ENCODE measurements at regions of chr4 and their contacts with region 1.

Region 1: GRCh38 chr4:175536852-175537453 is 275.1 kb downstream of the GPM6A start:
- DNase-seq: no peak
- H3K4me3 ChIP-seq: no peak overlapping the region
- H3K27ac ChIP-seq: no peak overlapping the region
- H3K4me1 ChIP-seq: no peaks in the 10 kb centered on the region
- H3K27me3 ChIP-seq: no peaks in the 10 kb centered on the region
- CTCF ChIP-seq: peak; percentile 15 to 57 (median 41)

Region 2: DNA sequence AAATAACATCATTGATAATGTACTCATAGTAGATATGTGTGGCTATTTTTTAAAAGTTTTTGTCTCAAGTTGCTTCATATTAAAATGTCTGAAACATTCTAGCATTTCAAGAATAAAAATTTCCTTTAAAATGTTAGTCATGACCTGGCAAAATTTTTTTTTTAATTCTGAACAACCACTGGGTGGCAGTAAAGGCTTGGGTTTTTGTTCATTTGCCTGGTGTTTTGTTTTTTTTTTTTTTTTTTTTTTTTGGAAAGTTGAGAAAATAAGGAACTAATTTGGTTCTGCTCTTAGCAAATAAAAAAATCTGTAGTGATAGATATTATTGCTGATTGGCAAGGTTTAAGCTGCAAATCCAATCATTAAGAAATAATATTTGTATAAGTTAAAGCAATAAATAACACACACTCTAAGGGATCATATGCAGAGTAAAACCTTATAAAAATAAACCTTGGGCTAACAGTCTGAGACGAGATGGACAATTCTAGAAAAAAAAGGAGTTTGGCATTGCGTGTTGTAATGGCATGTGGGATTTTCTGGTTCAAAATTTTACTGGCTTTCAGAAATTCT is 1171.8 kb before region 1 on chr4:
- intact Hi-C with region 1: loop called (anchors 5 kb)
- DNase-seq: no peak
- H3K4me3 ChIP-seq: no peak overlapping the region
- H3K27ac ChIP-seq: no peak overlapping the region
- H3K4me1 ChIP-seq: no peaks in the 10 kb centered on the region
- H3K27me3 ChIP-seq: no peaks in the 10 kb centered on the region
- CTCF ChIP-seq: peak in 2 of 3 experiments; percentile 32 to 52

Region 3: DNA sequence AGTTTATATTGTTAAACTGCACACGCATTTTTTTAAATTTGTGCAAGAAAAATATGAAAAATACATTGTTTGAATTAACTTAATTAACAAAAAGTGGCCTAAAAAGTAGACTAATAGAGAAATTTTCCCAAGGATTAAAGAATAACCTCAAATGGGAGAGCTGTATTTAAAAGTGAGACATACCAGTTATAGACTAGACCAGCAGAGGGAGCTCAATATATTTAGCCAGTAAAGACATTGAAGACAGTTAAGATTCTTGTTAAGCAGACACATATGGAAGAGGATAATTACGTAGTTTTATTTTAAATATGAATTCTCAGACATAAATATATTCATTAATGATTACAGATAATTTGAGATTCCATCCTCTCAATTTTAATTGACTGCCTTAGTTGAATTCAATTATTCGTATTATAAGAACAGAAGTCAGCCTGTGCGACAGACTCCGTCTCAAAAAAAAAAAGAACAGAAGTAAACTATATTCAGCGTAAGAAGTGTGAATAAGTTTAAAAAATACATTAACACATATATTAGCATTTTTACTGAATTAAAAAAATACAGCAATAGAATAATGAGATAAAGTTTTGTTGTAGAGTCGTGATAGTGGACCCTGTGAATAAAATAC is 772.7 kb before region 1 on chr4:
- intact Hi-C with region 1: loop called (anchors 2 kb)
- DNase-seq: no peak
- H3K4me3 ChIP-seq: no peak overlapping the region
- H3K27ac ChIP-seq: no peak overlapping the region
- H3K4me1 ChIP-seq: no peaks in the 10 kb centered on the region
- H3K27me3 ChIP-seq: no peaks in the 10 kb centered on the region
- CTCF ChIP-seq: peak; percentile 15 to 44 (median 34)

Region 4: GRCh38 chr4:175646802-175647201 is 109.8 kb after region 1 on chr4:
- intact Hi-C with region 1: no loop called
- DNase-seq: no peak
- H3K4me3 ChIP-seq: no peak overlapping the region
- H3K27ac ChIP-seq: no peak overlapping the region
- H3K4me1 ChIP-seq: no peaks in the 10 kb centered on the region
- H3K27me3 ChIP-seq: no peaks in the 10 kb centered on the region
- CTCF ChIP-seq: no peak

Region 5: GRCh38 chr4:177047070-177047850 is 1510.3 kb after region 1 on chr4:
- intact Hi-C with region 1: no loop called
- DNase-seq: no peak
- H3K4me3 ChIP-seq: no peak overlapping the region
- H3K27ac ChIP-seq: no peak overlapping the region
- H3K4me1 ChIP-seq: no peaks in the 10 kb centered on the region
- H3K27me3 ChIP-seq: no peaks in the 10 kb centered on the region
- CTCF ChIP-seq: peak; percentile 32 to 73 (median 66)